Right ventricle myocardium inferior (tissue), 1 donor: ENCODE measurements at regions of chr2 and their contacts with region 1.

Region 1: GRCh38 chr2:168687314-168687713 is 115.1 kb upstream of the NOSTRIN start:
- DNase-seq: no peak
- ATAC-seq: no peak

Region 2: GRCh38 chr2:168443818-168444217 is 243.5 kb before region 1 on chr2:
- intact Hi-C with region 1: loop called (anchors 5 kb)
- DNase-seq: no peak
- ATAC-seq: peak; percentile 50